Naive thymus-derived CD4-positive, alpha-beta T cell (primary cell): ENCODE measurements at regions of chr6 and their contacts with region 1.

Region 1: GRCh38 chr6:138773177-138774091 is at the start of gene CCDC28A:
- DNase-seq: peak; percentile 86 to 98 (median 97)
- ATAC-seq: peak; percentile 93
- H3K4me3 ChIP-seq: peak within 1 kb of the TSS; percentile 94
- H3K4me3 Mint-ChIP-seq: peak within 1 kb of the TSS; percentile 91 to 100 (median 99)
- H3K27ac ChIP-seq: peak within 1 kb of the TSS; percentile 87
- H3K27ac Mint-ChIP-seq: peak within 1 kb of the TSS; percentile 96 to 100 (median 100)
- H3K4me1 ChIP-seq: peaks cover 6 to 10% of the 10 kb centered on the region in 2 donors
- H3K4me1 Mint-ChIP-seq: peaks cover 4 to 39% (median 36%) of the 10 kb centered on the region in 7 donors
- H3K27me3 ChIP-seq: no peaks in the 10 kb centered on the region
- H3K27me3 Mint-ChIP-seq: no peaks in the 10 kb centered on the region
- total RNA-seq, gene CCDC28A: 19.9 to 34.2 (median 25.6) TPM

Region 2: DNA sequence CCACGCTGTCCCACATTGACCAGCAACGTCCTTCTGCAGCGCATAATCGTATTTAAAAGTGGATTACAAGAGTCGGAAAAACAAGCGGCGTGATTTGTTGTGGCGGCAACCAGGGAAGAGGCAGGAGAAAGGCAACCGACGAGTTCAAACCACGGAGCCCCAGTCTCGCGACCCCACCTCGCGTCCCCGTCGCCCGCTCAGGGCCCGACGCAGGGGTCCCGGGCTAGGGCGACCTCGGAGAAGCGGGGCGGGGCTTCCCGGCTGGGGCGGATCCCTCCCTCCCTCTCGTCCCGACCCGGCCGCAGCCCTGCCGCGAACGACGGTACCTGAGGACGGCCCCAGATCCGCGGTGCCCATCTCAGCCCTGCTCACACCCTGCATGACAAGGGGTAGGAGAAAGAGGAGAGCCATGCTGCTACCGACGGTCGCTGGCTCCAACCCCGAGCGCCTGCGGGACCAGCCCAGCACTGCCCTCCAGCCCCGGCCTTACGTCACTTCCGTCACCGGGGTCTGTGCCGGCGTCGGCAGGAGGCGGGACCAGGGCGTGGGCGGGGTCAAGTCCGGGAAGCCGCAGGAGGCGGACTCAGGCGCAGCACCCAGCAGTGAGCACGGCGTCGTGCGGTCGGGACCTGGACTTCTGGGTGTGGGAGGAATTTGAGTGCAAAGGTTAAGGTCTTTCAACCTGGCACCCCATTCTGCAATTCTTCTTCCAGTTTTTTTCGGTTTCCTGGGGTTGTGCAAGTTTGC is 1554.3 kb before region 1 on chr6 and contains the start of gene IFNGR1:
- CTCF ChIA-PET with region 1: no interaction called
- POLR2A ChIA-PET with region 1: no interaction called
- intact Hi-C with region 1: loop called in 1 of 2 experiments (anchors 10 kb)
- DNase-seq: peak; percentile 89 to 97 (median 93)
- ATAC-seq: peak; percentile 92
- H3K4me3 ChIP-seq: peak within 1 kb of the TSS; percentile 88
- H3K4me3 Mint-ChIP-seq: peak within 1 kb of the TSS; percentile 85 to 100 (median 99)
- H3K27ac ChIP-seq: peak within 1 kb of the TSS; percentile 91
- H3K27ac Mint-ChIP-seq: peak within 1 kb of the TSS; percentile 91 to 100 (median 100)
- H3K4me1 ChIP-seq: peaks cover 20 to 43% of the 10 kb centered on the region in 2 donors
- H3K4me1 Mint-ChIP-seq: peaks cover 36 to 84% (median 69%) of the 10 kb centered on the region in 7 donors
- H3K27me3 ChIP-seq: no peaks in the 10 kb centered on the region
- H3K27me3 Mint-ChIP-seq: no peaks in the 10 kb centered on the region
- total RNA-seq, gene IFNGR1: 29.2 to 90.7 (median 31.3) TPM

Region 3: DNA sequence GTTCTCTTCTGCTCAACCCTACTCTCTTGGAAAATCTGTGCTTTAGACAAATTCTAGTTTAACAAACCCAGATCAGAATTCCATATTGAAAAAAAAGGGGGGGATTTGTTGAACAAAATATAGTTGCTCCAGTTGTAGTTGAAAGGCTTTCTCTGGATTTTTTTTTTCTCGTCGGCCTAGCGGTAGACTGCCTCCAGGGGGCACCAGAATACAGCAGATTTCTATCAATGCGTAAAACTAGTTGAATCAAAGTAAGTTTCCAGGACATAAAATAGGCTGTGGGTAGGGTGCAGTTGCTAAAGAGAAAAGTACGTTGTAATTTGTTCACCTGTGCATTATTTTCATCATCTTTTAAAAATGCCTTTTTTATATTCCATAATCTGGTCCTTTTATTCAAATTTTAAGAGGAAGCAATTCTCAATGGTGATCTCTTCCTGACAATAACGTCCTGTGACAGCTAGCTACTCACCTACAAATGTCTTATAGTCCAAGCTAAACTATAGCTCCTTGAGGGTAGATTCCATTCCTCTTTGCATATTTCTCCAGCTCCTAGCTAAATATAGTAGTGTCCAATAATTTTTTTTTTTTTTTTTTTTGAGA is 771.6 kb before region 1 on chr6:
- CTCF ChIA-PET with region 1: no interaction called
- POLR2A ChIA-PET with region 1: no interaction called
- intact Hi-C with region 1: loop called in 1 of 2 experiments (anchors 5 kb)
- DNase-seq: peak in 8 of 9 donors; percentile 37 to 65 (median 56)
- ATAC-seq: peak; percentile 79
- H3K4me3 ChIP-seq: no peak overlapping the region
- H3K4me3 Mint-ChIP-seq: no peak overlapping the region
- H3K27ac ChIP-seq: no peak overlapping the region
- H3K27ac Mint-ChIP-seq: peak overlapping the region in 1 of 9 donors; percentile 27
- H3K4me1 ChIP-seq: no peaks in the 10 kb centered on the region
- H3K4me1 Mint-ChIP-seq: peaks cover 0 to 16% (median 5%) of the 10 kb centered on the region in 7 donors
- H3K27me3 ChIP-seq: no peaks in the 10 kb centered on the region
- H3K27me3 Mint-ChIP-seq: peaks cover 0 to 11% (median 0%) of the 10 kb centered on the region in 5 donors

Region 4: DNA sequence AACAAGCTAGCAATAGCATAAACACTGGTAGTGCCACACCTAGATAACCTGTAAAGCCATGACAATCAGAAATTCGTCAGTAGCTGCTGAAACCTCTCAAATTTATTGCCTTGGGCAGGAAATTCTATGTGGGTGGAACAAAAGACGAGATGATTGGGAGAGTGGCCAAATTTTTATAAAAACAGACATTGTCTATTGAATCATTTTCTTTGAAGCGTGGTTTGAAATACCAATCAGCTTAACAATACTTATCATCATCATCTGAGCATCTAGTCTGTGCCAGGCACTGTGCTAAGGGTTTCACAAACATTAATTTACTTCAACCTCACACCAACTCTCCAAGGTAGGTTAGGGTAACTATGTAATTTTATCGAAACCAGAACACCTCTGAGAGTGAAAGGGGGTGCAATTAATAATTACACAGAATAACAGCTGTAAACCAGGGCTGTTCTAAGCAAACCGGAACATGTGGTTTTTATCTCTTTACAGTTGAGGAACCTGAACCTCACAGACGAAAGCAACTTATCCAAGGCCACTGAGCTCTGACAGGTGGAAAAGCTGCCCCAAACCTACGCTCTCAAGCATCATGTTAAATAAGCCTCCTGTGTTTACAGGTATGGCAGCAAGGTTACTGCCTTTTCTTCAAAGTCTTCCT is 317.6 kb before region 1 on chr6:
- CTCF ChIA-PET with region 1: no interaction called
- POLR2A ChIA-PET with region 1: interaction called, 3 read pairs
- intact Hi-C with region 1: loop called in 1 of 2 experiments (anchors 1 kb)
- DNase-seq: peak in 7 of 9 donors; percentile 51 to 81 (median 75)
- ATAC-seq: peak; percentile 86
- H3K4me3 ChIP-seq: peak overlapping the region; percentile 48
- H3K4me3 Mint-ChIP-seq: peak overlapping the region; percentile 40 to 79 (median 70)
- H3K27ac ChIP-seq: peak overlapping the region; percentile 75
- H3K27ac Mint-ChIP-seq: peak overlapping the region; percentile 77 to 97 (median 93)
- H3K4me1 ChIP-seq: peaks cover 19 to 22% of the 10 kb centered on the region in 2 donors
- H3K4me1 Mint-ChIP-seq: peaks cover 5 to 32% (median 22%) of the 10 kb centered on the region in 7 donors
- H3K27me3 ChIP-seq: no peaks in the 10 kb centered on the region
- H3K27me3 Mint-ChIP-seq: peaks cover 0 to 3% (median 0%) of the 10 kb centered on the region in 5 donors

Region 5: DNA sequence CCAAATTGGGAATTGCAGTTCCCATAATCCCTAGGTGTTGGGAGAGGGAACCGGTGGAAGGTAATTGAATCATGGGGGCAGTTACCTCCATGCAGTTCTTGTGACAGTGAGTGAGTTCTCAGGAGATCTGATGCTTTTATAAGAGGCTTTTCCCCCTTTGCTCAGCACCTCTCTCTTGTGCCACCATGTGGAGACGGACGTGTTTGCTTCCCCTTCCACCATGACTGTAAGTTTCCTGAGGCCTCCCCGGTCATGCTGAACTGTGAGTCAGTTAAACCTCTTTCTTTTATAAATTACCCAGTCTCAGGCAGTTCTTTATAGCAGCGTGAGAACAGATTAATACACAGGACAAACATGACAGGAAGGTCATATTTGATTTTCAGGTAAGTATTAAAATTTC is 336.1 kb after region 1 on chr6:
- CTCF ChIA-PET with region 1: no interaction called
- POLR2A ChIA-PET with region 1: interaction called, 4 read pairs
- intact Hi-C with region 1: loop called in 1 of 2 experiments (anchors 5 kb)
- DNase-seq: peak in 2 of 9 donors; percentile 21 to 28
- ATAC-seq: no peak
- H3K4me3 ChIP-seq: no peak overlapping the region
- H3K4me3 Mint-ChIP-seq: peak overlapping the region in 2 of 10 donors; percentile 6 to 36
- H3K27ac ChIP-seq: no peak overlapping the region
- H3K27ac Mint-ChIP-seq: peak overlapping the region in 8 of 9 donors; percentile 38 to 94 (median 86)
- H3K4me1 ChIP-seq: peaks cover 36 to 48% of the 10 kb centered on the region in 2 donors
- H3K4me1 Mint-ChIP-seq: peaks cover 17 to 74% (median 59%) of the 10 kb centered on the region in 7 donors
- H3K27me3 ChIP-seq: no peaks in the 10 kb centered on the region
- H3K27me3 Mint-ChIP-seq: no peaks in the 10 kb centered on the region